Cardiac septum (tissue), 1 donor: ENCODE measurements at regions of chr2 and their contacts with region 1.

Region 1: GRCh38 chr2:168455648-168456520 is at the start of gene CERS6:
- DNase-seq: peak; percentile 99
- total RNA-seq, gene CERS6: 58.6 TPM

Region 2: DNA sequence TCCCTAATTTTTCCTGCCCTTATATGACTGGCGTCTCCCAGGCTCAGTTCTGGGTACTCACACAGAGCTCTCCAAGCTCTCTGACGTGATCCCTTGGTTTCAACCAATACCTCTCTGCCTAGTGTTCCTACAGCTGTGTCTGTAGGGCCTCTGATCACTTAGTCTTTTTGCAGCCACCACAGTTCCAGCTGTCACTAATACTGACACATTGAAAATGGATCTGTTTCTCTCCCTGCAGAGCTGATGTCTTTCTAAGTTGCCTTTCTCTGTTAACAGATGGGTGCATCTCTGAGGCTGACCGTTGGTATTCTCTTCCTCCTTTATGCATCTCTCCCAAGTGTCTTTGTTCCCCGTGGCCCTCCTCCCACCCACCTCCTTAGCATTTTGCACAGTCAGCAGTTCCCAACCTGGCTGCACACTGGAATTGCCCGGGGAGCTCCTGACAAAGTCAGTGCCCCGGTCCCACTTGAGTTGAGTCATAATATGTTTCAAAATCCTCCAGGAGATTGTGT is 62.7 kb after region 1 on chr2:
- intact Hi-C with region 1: loop called (anchors 2 kb)
- DNase-seq: no peak

Region 3: DNA sequence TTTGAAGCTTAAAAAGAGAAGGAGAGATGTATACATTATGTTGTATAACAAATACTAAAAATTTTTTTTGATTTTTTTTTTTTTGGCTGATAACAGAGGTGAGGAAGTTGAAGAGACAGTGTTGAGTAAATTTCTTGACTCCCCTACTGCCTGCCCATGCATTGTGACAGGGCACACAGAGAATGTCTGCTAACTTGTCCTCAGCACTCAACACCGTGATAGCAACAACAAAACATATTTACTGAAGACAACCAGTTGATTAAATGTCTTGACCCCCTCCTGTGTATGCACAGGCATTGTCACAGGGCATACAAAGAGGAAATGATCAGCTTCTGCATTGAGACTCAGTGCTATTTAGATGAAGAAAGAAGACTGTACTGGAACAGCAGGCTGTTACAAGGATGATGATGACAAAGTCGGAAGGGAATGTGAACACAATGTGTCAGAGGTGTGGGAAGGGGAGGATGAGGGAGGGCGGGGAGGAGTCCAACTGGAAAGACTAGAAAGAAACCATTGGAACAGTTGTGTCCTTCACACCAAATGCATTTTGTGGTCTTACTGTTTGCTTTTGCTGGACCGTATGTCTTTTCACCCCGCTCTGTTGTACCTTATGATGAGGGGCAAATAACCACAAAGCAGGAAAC is 89.7 kb after region 1 on chr2:
- intact Hi-C with region 1: loop called (anchors 5 kb)
- DNase-seq: no peak

Region 4: GRCh38 chr2:168635065-168635577 is 179.2 kb after region 1 on chr2:
- intact Hi-C with region 1: loop called (anchors 5 kb)
- DNase-seq: no peak

Region 5: GRCh38 chr2:168687314-168687713 is 231.4 kb after region 1 on chr2:
- intact Hi-C with region 1: loop called (anchors 5 kb)
- DNase-seq: no peak

Region 6: DNA sequence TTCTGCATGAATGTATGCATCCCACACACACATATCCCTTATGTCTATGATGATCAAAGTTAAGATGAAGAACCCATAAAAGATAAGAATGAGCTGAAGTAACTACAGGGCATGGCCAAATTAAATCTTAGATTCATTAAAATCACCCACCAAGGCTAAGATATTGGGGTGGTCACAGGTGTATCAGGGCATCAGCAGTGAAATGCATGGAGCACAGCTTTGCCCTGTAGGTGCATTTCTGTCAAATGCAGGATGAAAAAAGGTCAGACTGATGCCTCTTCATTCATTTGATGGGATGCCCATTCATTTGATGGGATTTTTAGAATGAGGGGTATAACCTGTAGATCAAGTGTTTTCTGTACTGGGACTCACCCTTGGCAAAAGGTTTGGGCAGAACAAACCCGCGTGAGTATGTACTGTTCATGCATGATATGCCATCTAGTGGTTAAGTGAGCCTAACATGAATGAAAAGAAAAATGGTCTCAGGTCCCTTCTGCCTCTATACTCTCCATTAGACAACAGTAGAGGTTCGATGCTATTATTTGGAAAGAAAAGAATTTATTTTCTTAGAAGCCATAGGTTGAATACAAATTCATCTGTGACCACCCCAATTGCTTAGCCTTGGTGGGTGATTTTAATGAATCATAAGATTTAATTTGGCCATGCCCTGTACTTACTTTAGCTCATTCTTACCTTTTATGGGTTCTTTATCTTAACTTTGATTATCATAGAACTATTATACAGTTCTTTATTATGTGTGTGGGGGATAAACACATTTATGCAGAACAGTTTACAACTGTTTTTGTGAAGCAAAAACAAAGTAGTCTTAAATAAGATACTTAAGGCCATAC is 303.3 kb after region 1 on chr2:
- intact Hi-C with region 1: loop called (anchors 5 kb)
- DNase-seq: no peak